ENCODE measurements at regions of chr2 and their contacts with region 1.

Region 1: DNA sequence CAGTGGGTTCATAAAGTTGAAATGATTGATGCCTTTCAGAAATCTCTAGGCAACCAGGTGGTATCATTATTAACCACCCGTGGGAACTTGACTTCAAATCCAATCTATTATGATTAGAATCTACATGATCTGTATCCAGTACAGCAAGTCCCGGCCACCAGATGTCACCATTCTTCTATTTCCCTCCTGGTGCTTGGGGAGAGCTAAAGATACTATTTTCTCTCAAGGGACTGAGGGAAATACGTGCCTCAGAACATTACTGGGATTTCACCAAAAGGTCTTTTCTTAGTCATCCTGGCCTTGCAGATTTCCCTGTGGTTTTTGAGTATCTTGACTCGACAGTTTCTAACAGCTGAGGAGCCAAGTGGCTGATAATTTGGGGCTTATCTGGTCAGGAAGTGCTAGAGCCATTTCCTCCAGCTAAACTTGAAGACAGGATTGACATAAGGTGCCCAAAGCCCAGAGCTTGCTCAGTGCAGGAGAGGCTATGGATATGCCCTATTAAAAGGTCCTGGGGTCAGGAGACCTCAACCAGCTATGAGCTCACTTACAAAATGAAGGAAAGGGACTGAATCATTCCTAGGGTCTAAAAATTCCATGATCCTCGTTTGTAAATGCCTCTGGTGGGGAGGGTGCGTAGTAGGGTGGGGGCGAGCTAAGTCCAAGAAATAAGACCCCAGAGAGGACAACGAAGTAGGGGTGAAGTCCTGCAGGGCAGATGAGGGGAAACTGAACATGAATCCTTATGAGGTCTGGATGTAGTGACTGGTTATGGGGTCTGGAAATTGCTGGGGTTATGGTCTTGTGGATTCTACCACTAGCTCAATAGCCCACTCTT is 135.4 kb upstream of the MGAT5 start:
- DNase-seq: peak; percentile 80 to 90 (median 81)
- H3K4me3 ChIP-seq: no peak overlapping the region
- H3K4me3 Mint-ChIP-seq: peak overlapping the region; percentile 96 to 100 (median 99)
- H3K27ac ChIP-seq: no peak overlapping the region
- H3K27ac Mint-ChIP-seq: peak overlapping the region; percentile 49 to 99 (median 96)
- H3K4me1 ChIP-seq: peaks cover 36% of the 10 kb centered on the region
- H3K4me1 Mint-ChIP-seq: peaks cover 27 to 41% (median 33%) of the 10 kb centered on the region in 4 donors
- H3K27me3 ChIP-seq: no peaks in the 10 kb centered on the region
- H3K27me3 Mint-ChIP-seq: no peaks in the 10 kb centered on the region

Region 2: DNA sequence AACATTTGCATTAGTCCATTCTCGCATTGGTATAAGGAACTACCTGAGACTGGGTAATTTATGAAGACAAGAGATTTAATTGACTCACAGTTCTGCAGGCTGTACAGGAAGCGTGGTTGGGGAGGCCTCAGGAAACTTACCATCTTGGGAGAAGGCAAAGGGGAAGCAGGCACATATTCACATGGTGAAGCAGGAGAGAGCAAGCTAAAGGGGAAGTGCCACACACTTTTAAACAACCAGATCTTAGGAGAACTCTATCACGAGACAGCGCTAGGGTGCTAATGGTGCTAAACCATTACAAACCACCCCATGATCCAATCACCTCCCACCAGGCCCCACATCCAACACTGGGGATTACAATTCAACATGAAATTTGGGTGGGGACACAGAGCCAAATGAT is 66.3 kb before region 1 on chr2:
- CTCF ChIA-PET with region 1: no interaction called
- POLR2A ChIA-PET with region 1: no interaction called
- intact Hi-C with region 1: no loop called
- DNase-seq: no peak
- H3K4me3 ChIP-seq: no peak overlapping the region
- H3K4me3 Mint-ChIP-seq: no peak overlapping the region
- H3K27ac ChIP-seq: no peak overlapping the region
- H3K27ac Mint-ChIP-seq: peak overlapping the region in 1 of 7 donors; percentile 19
- H3K4me1 ChIP-seq: no peaks in the 10 kb centered on the region
- H3K4me1 Mint-ChIP-seq: peaks cover 0 to 2% (median 0%) of the 10 kb centered on the region in 4 donors
- H3K27me3 ChIP-seq: no peaks in the 10 kb centered on the region
- H3K27me3 Mint-ChIP-seq: peaks cover 0 to 10% of the 10 kb centered on the region in 2 donors

Region 3: GRCh38 chr2:134181210-134181609 is 62.7 kb after region 1 on chr2:
- CTCF ChIA-PET with region 1: interaction called, 18 read pairs
- POLR2A ChIA-PET with region 1: interaction called, 62 read pairs
- intact Hi-C with region 1: loop called (anchors 1 kb)
- DNase-seq: peak; percentile 78 to 87 (median 80)
- H3K4me3 ChIP-seq: peak overlapping the region in 1 of 2 donors; percentile 20
- H3K4me3 Mint-ChIP-seq: peak overlapping the region; percentile 46 to 81 (median 68)
- H3K27ac ChIP-seq: peak overlapping the region; percentile 25
- H3K27ac Mint-ChIP-seq: peak overlapping the region; percentile 89 to 97 (median 93)
- H3K4me1 ChIP-seq: peaks cover 97% of the 10 kb centered on the region
- H3K4me1 Mint-ChIP-seq: peaks cover 83 to 98% (median 90%) of the 10 kb centered on the region in 4 donors
- H3K27me3 ChIP-seq: no peaks in the 10 kb centered on the region
- H3K27me3 Mint-ChIP-seq: no peaks in the 10 kb centered on the region

Region 4: DNA sequence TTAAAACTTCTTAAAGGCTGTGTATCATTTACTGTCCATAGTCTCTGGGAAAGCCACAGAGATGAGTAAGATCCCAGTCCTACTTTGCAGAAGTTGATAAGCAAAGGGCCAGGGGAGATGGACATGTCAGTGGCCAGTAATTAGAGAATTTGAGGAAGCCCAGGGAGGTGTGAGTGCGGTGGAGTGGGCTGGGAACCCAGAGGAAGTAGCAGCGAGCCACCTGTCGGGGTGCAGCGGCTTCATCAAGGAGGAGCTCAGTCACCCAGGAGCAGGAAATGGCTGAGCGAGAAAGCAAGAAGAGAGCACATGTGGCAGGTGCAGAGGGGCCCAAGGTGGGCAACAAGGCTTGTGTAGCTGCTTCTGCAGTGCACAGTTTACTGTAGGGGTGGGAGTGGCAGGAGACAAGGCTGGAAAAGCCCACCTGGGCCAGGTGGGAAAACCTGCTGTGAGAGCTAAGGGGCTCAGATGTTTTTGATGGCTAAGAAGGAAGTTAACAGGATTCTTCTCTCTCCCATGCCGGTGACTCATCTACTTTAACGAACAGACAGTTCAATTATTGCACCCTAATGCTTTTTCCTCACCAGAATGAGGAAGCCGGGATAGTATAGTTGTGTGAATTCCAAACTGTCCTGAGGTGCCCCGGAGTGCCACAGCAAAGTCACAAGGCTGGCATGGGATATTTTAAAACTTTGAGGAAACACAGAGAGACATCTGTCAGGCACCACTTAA is 100.6 kb after region 1 on chr2:
- CTCF ChIA-PET with region 1: interaction called, 80 read pairs
- POLR2A ChIA-PET with region 1: interaction called, 50 read pairs
- intact Hi-C with region 1: no loop called
- DNase-seq: peak in 4 of 5 donors; percentile 40 to 56 (median 48)
- H3K4me3 ChIP-seq: peak overlapping the region; percentile 12 to 13
- H3K4me3 Mint-ChIP-seq: peak overlapping the region; percentile 80 to 90 (median 84)
- H3K27ac ChIP-seq: peak overlapping the region; percentile 41
- H3K27ac Mint-ChIP-seq: peak overlapping the region; percentile 85 to 97 (median 90)
- H3K4me1 ChIP-seq: peaks cover 60% of the 10 kb centered on the region
- H3K4me1 Mint-ChIP-seq: peaks cover 65 to 78% (median 71%) of the 10 kb centered on the region in 4 donors
- H3K27me3 ChIP-seq: no peaks in the 10 kb centered on the region
- H3K27me3 Mint-ChIP-seq: no peaks in the 10 kb centered on the region

Region 5: DNA sequence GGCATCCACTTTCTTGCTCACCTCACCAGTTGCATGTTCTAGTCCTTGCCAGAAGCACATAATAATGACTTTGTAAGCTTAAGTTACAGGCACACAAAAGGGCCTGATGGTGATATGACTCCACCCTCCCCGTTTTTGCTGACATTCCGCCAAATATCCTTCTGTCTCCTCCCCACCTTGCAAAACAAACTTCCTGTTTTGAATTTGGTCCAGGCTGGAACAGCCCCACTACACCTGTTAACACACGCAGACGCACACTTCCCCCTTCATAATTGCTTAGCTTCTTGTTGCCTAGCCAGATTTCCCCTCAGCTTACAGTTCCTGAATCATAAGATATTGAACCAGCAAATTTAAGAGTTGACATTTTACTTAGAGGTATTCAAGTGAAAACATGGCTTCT is 135.3 kb after region 1 on chr2 and contains the start of gene MGAT5:
- CTCF ChIA-PET with region 1: interaction called, 39 read pairs
- POLR2A ChIA-PET with region 1: interaction called, 11 read pairs
- intact Hi-C with region 1: no loop called
- DNase-seq: no peak
- H3K4me3 ChIP-seq: no peak within 1 kb of the TSS
- H3K4me3 Mint-ChIP-seq: peak within 1 kb of the TSS; percentile 13 to 82 (median 44)
- H3K27ac ChIP-seq: no peak within 1 kb of the TSS
- H3K27ac Mint-ChIP-seq: peak within 1 kb of the TSS in 5 of 7 donors; percentile 67 to 93 (median 84)
- H3K4me1 ChIP-seq: peaks cover 90% of the 10 kb centered on the region
- H3K4me1 Mint-ChIP-seq: peaks cover 78 to 95% (median 87%) of the 10 kb centered on the region in 4 donors
- H3K27me3 ChIP-seq: no peaks in the 10 kb centered on the region
- H3K27me3 Mint-ChIP-seq: no peaks in the 10 kb centered on the region
- total RNA-seq, gene MGAT5: 78.1 to 81.3 TPM

Region 6: GRCh38 chr2:134420259-134420658 is 301.8 kb after region 1 on chr2:
- CTCF ChIA-PET with region 1: interaction called, 11 read pairs
- POLR2A ChIA-PET with region 1: no interaction called
- intact Hi-C with region 1: no loop called
- DNase-seq: no peak
- H3K4me3 ChIP-seq: no peak overlapping the region
- H3K4me3 Mint-ChIP-seq: no peak overlapping the region
- H3K27ac ChIP-seq: no peak overlapping the region
- H3K27ac Mint-ChIP-seq: peak overlapping the region in 1 of 7 donors; percentile 35
- H3K4me1 ChIP-seq: no peaks in the 10 kb centered on the region
- H3K4me1 Mint-ChIP-seq: peaks cover 0 to 11% (median 2%) of the 10 kb centered on the region in 4 donors
- H3K27me3 ChIP-seq: no peaks in the 10 kb centered on the region
- H3K27me3 Mint-ChIP-seq: no peaks in the 10 kb centered on the region

Region 7: GRCh38 chr2:134897932-134898331 is 779.4 kb after region 1 on chr2:
- CTCF ChIA-PET with region 1: no interaction called
- POLR2A ChIA-PET with region 1: no interaction called
- intact Hi-C with region 1: loop called (anchors 1 kb)
- DNase-seq: peak in 4 of 5 donors; percentile 8 to 16 (median 12)
- H3K4me3 ChIP-seq: no peak overlapping the region
- H3K4me3 Mint-ChIP-seq: no peak overlapping the region
- H3K27ac ChIP-seq: no peak overlapping the region
- H3K27ac Mint-ChIP-seq: no peak overlapping the region
- H3K4me1 ChIP-seq: no peaks in the 10 kb centered on the region
- H3K4me1 Mint-ChIP-seq: no peaks in the 10 kb centered on the region
- H3K27me3 ChIP-seq: no peaks in the 10 kb centered on the region
- H3K27me3 Mint-ChIP-seq: peaks cover 0 to 2% of the 10 kb centered on the region in 2 donors

Region 8: GRCh38 chr2:135258193-135258592 is 1139.7 kb after region 1 on chr2:
- CTCF ChIA-PET with region 1: no interaction called
- POLR2A ChIA-PET with region 1: no interaction called
- intact Hi-C with region 1: no loop called
- DNase-seq: no peak
- H3K4me3 ChIP-seq: no peak overlapping the region
- H3K4me3 Mint-ChIP-seq: no peak overlapping the region
- H3K27ac ChIP-seq: no peak overlapping the region
- H3K27ac Mint-ChIP-seq: no peak overlapping the region
- H3K4me1 ChIP-seq: no peaks in the 10 kb centered on the region
- H3K4me1 Mint-ChIP-seq: no peaks in the 10 kb centered on the region
- H3K27me3 ChIP-seq: no peaks in the 10 kb centered on the region
- H3K27me3 Mint-ChIP-seq: no peaks in the 10 kb centered on the region